ENCODE measurements at regions of chr12 and their contacts with region 1.

Region 1: DNA sequence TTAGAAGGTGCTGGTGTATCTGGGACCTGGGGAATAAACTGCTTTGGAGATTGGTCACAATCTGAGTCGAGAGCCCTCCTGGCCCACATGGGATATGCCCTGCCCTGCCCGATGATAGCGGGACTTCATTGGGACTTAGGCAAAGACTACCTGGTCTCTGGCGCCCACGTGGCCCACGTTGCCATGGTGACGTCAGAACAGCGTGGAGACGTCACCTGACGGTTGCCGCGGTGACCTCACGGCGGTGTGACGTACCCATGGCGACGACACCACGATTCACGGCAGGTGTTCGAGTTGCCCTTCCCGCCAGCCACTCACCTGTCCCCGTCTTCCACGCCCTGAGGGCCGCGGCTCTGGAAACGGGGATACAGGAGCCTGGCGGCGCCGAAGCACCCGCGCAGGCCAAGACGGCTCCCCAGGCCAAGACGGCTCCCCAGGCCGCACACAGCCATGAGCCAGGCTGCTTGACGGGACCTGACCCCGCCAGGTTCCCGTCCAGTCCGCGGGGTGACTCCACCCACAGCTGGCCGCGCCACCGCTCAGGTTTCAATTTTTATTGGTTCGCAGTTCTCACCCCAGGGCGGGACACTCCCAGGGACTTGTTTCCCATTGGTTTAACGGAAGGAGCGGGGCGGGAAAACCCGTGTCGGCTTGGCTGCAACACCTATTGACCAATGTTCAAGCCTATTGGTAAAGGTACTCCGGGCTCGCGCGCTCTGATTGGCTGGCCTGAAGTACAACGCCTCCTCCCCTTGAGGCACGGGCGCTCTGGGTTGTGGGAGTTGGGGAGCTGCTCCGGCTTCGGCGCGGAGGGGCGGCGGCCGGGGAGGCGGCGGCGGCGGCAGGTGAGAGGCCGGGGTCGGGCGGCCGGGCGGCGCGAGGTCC is at the starts of genes MMAB and MVK:
- DNase-seq: peak; percentile 99
- ATAC-seq: peak; percentile 96
- H3K4me3 ChIP-seq: peak within 1 kb of the TSS; percentile 44 to 87 (median 72)
- H3K4me3 Mint-ChIP-seq: peak within 1 kb of the TSS; percentile 96
- H3K27ac ChIP-seq: peak within 1 kb of the TSS; percentile 89 to 98
- H3K27ac Mint-ChIP-seq: peak within 1 kb of the TSS; percentile 94
- H3K4me1 ChIP-seq: peaks cover 14 to 23% of the 10 kb centered on the region in 2 donors
- H3K4me1 Mint-ChIP-seq: peaks cover 29% of the 10 kb centered on the region
- H3K27me3 ChIP-seq: no peaks in the 10 kb centered on the region
- H3K27me3 Mint-ChIP-seq: no peaks in the 10 kb centered on the region
- CTCF ChIP-seq: no peak
- total RNA-seq, gene MMAB: 20.5 and 24.6 TPM in 2 replicates
- total RNA-seq, gene MVK: 12.5 and 15.6 TPM in 2 replicates

Region 2: DNA sequence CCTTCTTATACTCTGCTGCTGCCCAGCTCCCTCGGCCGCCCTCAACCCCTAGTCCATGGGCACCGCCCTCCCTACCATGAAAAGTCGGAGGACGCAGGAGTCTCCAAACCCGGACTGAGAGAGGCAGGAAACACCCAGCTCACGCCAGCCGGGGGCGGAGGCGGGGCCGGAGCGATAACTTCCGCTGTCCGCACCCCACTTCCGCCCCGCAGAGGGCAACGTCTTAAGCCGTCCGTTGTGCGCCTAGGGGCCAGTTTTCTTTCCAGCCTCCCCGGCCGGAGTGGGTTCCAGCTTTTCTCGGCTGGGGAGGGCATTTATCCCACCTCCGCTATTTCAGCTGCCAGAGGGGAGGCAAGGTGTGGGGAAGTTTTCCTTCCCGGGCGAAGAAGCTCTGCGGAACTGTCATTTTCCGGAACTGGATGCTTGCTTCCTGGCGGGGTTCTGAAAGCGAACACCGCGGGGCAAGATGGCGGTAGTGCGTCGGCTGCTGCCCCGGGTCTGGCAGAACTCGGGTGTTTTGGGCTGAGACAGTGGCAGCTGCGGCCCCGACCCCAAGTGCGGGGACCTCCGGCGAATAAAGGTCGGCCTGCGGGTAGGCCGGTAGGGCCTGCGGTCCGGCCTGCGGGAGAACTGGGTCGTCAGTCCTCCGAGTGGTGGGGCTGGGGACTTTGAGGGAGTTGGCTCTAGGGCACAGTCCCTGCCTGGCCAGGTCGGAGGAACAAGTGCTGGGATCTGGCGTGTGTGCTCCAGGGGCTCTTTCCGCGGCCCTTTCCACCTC is 95.9 kb before region 1 on chr12 and contains the starts of genes KCTD10 and UBE3B:
- CTCF ChIA-PET with region 1: no interaction called
- POLR2A ChIA-PET with region 1: no interaction called
- intact Hi-C with region 1: loop called (anchors 1 kb)
- DNase-seq: peak; percentile 94
- ATAC-seq: peak; percentile 94
- H3K4me3 ChIP-seq: peak within 1 kb of the TSS; percentile 73 to 99 (median 96)
- H3K4me3 Mint-ChIP-seq: peak within 1 kb of the TSS; percentile 99
- H3K27ac ChIP-seq: peak within 1 kb of the TSS; percentile 76 to 93
- H3K27ac Mint-ChIP-seq: peak within 1 kb of the TSS; percentile 98
- H3K4me1 ChIP-seq: peaks cover 22 to 23% of the 10 kb centered on the region in 2 donors
- H3K4me1 Mint-ChIP-seq: peaks cover 43% of the 10 kb centered on the region
- H3K27me3 ChIP-seq: no peaks in the 10 kb centered on the region
- H3K27me3 Mint-ChIP-seq: no peaks in the 10 kb centered on the region
- CTCF ChIP-seq: no peak
- total RNA-seq, gene KCTD10: 30.9 and 33.3 TPM in 2 replicates
- total RNA-seq, gene UBE3B: 52.1 and 54.3 TPM in 2 replicates

Region 3: DNA sequence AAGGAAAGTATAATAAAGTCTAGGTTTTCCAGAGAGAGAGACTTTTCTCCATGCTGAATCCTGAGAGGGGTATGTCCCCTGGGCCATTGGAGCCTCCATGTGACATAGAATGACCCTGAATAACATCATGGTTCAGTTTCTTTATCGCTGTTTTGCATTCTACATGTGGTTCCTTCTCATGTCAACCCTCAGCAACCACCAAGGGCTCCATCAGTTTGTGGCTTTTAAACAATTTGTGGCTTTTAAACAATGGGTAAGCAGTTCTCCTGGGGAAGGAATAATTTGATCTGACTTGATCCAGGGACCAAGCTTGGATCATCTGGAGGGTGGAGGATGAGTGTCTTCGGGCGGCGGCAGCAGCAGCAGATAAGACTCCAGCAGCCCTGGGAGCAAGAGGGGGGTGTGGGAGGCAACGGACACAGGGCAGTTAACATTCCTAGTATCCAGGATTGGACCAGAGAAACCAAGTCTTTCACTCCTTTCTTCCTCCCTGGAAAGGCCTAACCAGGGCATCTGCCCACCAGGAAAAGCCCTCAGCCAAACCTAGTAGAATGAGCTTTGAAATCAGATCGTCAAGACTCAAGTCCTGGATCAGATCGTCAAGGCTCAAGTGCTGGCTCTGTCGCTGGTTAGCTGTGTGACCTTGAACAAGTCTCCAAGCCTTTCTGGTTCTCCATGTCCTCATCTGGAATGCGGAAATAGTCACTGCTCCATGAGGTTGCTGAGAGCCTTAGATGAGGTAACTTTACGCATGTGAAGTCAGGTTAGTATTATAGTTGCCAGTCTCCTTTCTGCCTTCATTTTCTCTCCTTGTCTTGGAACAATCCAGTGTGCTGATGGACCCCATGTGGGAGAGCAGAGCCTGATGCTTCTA is 112.5 kb after region 1 on chr12:
- CTCF ChIA-PET with region 1: no interaction called
- POLR2A ChIA-PET with region 1: no interaction called
- intact Hi-C with region 1: no loop called
- DNase-seq: no peak
- ATAC-seq: no peak
- H3K4me3 ChIP-seq: no peak overlapping the region
- H3K4me3 Mint-ChIP-seq: no peak overlapping the region
- H3K27ac ChIP-seq: no peak overlapping the region
- H3K27ac Mint-ChIP-seq: no peak overlapping the region
- H3K4me1 ChIP-seq: no peaks in the 10 kb centered on the region
- H3K4me1 Mint-ChIP-seq: no peaks in the 10 kb centered on the region
- H3K27me3 ChIP-seq: no peaks in the 10 kb centered on the region
- H3K27me3 Mint-ChIP-seq: peaks cover 16% of the 10 kb centered on the region
- CTCF ChIP-seq: no peak

Measured in B cell (primary cell).